SK-N-SH (cell line): ENCODE measurements at regions of chr1 and their contacts with region 1.

Region 1: DNA sequence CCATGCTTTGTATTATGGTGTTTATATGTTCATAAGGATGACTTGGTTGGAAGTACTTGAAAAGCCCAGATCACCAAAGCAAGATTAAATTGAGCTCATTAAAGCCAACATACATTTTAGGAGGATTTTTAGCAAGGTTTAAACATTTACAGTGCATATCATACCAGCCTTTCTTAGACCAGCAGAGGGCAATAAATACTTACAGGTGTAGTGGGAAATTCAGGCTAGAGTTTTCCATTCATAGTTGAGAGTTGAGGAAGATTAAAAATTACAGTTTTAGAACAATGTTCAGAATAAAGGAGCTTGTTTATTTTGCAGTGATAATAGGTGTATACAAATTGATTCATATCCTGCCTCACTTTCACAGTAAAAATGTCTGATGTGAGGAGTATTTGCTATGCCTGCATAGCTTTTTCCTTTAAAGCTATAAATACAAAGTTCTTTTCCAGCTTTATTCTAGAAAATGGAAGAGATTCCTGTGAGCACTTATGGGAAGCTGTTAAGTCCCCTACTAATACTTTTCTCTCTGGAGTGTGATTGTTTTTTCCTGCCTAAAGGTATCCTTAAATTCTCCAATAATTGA is 35.3 kb downstream of the DTL start:
- DNase-seq: peak; percentile 15
- H3K4me3 ChIP-seq: no peak overlapping the region; a peak in 1 of 4 replicates
- H3K27ac ChIP-seq: no peak overlapping the region
- H3K4me1 ChIP-seq: no peaks in the 10 kb centered on the region
- H3K27me3 ChIP-seq: no peaks in the 10 kb centered on the region
- CTCF ChIP-seq: peak; percentile 85
- EP300 ChIP-seq: no peak
- RAD21 ChIP-seq: peak; percentile 89

Region 2: GRCh38 chr1:212040629-212041028 is 30.2 kb before region 1 on chr1:
- CTCF ChIA-PET with region 1: interaction called, 14 read pairs
- POLR2A ChIA-PET with region 1: no interaction called
- DNase-seq: no peak
- H3K4me3 ChIP-seq: no peak overlapping the region; a peak in 1 of 4 replicates
- H3K27ac ChIP-seq: no peak overlapping the region; a peak in 1 of 4 replicates
- H3K4me1 ChIP-seq: peaks cover 0 to 17% of the 10 kb centered on the region in 2 experiments; a peak in 3 of 4 replicates
- H3K27me3 ChIP-seq: no peaks in the 10 kb centered on the region
- CTCF ChIP-seq: no peak
- EP300 ChIP-seq: no peak
- RAD21 ChIP-seq: no peak

Region 3: DNA sequence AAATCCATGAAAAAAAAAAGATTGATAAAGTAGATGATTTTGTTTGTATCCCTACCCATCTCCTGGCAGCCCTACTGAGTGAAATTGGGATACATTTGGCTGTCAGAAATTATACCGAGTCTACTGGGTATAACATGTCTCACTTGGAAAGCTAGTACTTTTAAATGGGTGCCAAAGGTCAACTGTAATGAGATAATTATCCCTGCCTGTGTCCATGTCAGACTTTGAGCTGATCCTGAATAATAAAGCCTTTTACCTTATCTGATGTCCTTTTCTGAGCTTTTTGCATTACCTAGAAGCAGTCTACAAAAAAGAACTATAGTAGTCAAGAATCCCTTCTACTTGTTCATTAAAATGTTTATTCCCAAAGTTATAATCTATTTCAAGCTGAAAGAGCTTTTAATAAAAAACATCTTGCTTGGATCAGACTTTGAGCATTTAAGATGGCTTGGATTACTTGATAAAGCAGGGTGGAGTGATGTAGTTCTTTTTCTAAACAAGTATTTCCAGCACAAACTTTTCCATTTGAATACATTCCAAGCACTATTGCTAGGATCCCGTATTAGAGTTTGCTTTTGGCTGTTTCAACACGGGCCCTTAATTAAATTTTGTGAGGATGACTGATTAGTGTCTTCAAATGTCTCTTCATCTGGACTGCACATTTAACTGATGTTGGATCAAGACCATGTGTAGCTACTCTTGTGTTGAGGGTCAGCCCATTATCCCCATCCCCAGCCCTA is 33.9 kb after region 1 on chr1:
- CTCF ChIA-PET with region 1: interaction called, 16 read pairs
- POLR2A ChIA-PET with region 1: no interaction called
- DNase-seq: peak; percentile 21
- H3K4me3 ChIP-seq: no peak overlapping the region
- H3K27ac ChIP-seq: peak overlapping the region in 1 of 2 experiments; percentile 28; a peak in 2 of 4 replicates
- H3K4me1 ChIP-seq: peaks cover 0 to 17% of the 10 kb centered on the region in 2 experiments; a peak in 2 of 4 replicates
- H3K27me3 ChIP-seq: no peaks in the 10 kb centered on the region
- CTCF ChIP-seq: no peak
- EP300 ChIP-seq: no peak
- RAD21 ChIP-seq: no peak

Region 4: GRCh38 chr1:212188599-212189351 is 118.0 kb after region 1 on chr1:
- CTCF ChIA-PET with region 1: no interaction called
- POLR2A ChIA-PET with region 1: no interaction called
- DNase-seq: no peak
- H3K4me3 ChIP-seq: no peak overlapping the region
- H3K27ac ChIP-seq: no peak overlapping the region
- H3K4me1 ChIP-seq: peaks cover 0 to 8% of the 10 kb centered on the region in 2 experiments; a peak in 1 of 4 replicates
- H3K27me3 ChIP-seq: no peaks in the 10 kb centered on the region
- CTCF ChIP-seq: no peak
- EP300 ChIP-seq: no peak
- RAD21 ChIP-seq: no peak

Region 5: DNA sequence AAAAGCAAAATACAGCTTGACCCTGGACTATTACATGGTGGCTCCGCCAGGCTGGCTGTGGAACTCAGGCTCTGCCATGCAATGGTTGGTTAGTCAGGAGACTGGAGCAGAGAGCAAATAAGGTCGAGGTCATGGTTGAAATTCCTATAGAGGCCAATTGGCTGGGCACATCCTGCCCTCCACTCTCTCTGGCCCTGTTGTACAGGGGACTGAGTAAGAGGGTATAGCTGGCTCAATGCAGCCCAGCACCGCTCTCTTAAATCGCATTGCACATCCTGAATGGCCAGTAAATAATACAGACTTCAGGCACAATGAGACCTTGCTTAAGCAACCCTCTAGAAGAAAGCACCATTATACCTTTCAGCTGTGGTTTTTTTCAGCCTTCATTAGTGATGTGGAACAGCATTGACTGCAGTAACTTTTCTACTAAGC is 155.1 kb after region 1 on chr1:
- CTCF ChIA-PET with region 1: no interaction called
- POLR2A ChIA-PET with region 1: no interaction called
- DNase-seq: no peak
- H3K4me3 ChIP-seq: no peak overlapping the region
- H3K27ac ChIP-seq: no peak overlapping the region
- H3K4me1 ChIP-seq: no peaks in the 10 kb centered on the region; a peak in 1 of 4 replicates
- H3K27me3 ChIP-seq: no peaks in the 10 kb centered on the region
- CTCF ChIP-seq: no peak
- EP300 ChIP-seq: no peak
- RAD21 ChIP-seq: no peak

Region 6: DNA sequence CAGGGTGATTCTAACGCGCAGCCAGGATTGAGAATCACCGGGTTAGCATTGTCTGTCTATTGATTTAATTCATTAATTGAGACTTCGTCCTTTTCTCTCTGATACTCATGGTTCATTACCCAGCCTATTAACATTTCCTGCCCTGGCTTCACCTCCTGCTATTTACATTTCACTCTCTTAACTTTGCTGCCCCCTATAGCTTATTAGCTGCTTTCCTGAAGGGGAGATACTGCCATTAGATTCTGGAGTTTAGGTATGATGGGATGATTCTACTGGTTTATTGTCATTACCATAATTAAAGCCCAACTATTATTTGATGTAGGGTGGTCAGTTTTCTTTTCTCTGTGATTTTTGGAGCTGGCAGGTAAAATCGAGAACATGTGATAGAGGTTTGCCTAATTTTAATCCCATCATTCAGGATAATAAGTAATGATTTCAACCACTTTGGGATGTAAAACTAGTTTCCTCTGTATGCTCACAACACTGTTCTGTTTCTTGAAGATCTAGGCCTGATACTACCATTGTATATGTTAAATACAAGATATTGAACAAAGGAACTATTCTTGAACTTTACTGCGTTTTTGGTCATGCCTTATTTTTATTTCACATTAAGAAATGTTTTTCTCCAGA is 220.8 kb after region 1 on chr1:
- CTCF ChIA-PET with region 1: interaction called, 103 read pairs
- POLR2A ChIA-PET with region 1: interaction called, 3 read pairs
- DNase-seq: peak; percentile 71
- H3K4me3 ChIP-seq: no peak overlapping the region
- H3K27ac ChIP-seq: no peak overlapping the region
- H3K4me1 ChIP-seq: peaks cover 7 to 32% of the 10 kb centered on the region in 2 experiments; a peak in 3 of 4 replicates
- H3K27me3 ChIP-seq: no peaks in the 10 kb centered on the region
- CTCF ChIP-seq: peak; percentile 75
- EP300 ChIP-seq: no peak
- RAD21 ChIP-seq: peak; percentile 90

Region 7: DNA sequence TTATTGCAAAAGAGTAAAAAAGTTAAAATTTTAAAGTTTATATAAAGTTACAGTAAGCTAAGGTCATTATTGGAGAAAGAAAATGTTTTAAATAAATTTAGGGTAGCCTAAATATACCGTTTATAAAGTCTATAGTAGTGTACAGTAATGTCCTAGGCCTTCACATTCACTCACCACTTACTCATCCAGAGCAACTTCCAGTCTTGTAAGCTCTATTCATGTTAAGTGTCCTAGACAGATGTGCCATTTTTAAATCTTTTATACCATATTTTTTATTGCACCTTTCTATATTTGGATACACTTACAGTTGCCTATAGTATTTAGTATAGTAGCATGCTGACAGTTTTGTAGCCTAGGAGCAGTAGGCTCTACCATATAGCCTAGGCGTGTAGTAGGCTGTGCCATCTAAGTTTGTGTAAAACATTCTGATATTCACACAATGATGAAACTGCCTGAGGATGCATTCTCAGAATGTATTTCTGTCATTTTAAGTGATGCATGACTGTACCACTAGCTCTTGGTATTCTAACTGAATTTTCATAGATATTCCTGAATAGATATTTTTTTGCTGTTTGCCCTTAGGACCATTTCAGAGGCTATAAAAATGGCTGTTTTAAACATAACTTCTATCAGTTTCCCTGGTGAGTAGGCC is 241.2 kb after region 1 on chr1:
- CTCF ChIA-PET with region 1: interaction called, 13 read pairs
- POLR2A ChIA-PET with region 1: no interaction called
- DNase-seq: no peak
- H3K4me3 ChIP-seq: no peak overlapping the region
- H3K27ac ChIP-seq: no peak overlapping the region
- H3K4me1 ChIP-seq: no peaks in the 10 kb centered on the region; a peak in 1 of 4 replicates
- H3K27me3 ChIP-seq: no peaks in the 10 kb centered on the region
- CTCF ChIP-seq: no peak
- EP300 ChIP-seq: no peak
- RAD21 ChIP-seq: no peak

Region 8: GRCh38 chr1:212463565-212464285 is 392.9 kb after region 1 on chr1:
- CTCF ChIA-PET with region 1: interaction called, 187 read pairs
- POLR2A ChIA-PET with region 1: no interaction called
- DNase-seq: no peak
- H3K4me3 ChIP-seq: no peak overlapping the region
- H3K27ac ChIP-seq: no peak overlapping the region
- H3K4me1 ChIP-seq: no peaks in the 10 kb centered on the region
- H3K27me3 ChIP-seq: no peaks in the 10 kb centered on the region
- CTCF ChIP-seq: no peak
- EP300 ChIP-seq: no peak
- RAD21 ChIP-seq: no peak